ENCODE measurements at regions of chr3 and their contacts with region 1.

Region 1: DNA sequence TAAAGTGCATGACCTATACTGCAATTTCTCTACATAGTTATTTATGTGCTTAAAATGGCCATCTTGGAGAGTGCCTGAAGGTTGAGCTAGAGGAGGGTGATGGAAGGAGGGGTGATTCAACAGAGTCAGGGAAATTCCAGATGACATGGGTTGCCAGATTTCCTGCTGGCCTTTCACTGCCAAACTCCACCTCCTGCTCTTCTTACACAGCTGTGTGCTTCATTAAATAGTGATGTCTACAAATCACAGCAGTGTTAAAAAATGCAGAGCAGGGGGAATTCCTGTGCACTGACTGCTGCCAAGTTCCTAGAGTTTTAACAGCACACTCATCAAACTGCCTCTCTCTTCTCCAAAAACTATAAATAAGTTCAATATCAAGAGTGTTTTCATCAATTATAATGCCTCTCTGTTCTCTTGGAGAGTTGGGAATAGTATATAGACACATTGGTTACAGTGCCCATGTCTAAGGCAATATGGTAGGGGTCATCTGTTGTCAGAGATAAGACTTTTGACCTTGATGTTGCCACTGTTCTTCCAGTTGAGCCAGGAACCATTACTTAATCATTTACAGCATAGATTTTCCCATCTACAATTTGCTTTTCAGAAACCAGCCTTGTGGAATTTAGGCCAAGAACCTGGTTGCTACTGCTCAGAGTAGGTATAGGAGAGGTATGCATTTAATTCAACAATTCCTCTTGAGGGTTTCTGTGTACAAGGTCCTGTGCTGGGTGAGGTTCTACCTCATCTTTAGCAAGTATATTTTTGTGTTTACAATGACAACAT is 79.6 kb downstream of the TP63 start:
- DNase-seq: peak; percentile 95
- H3K4me3 ChIP-seq: no peak overlapping the region
- H3K27ac ChIP-seq: peak overlapping the region; percentile 57
- H3K4me1 ChIP-seq: peaks cover 22% of the 10 kb centered on the region
- H3K27me3 ChIP-seq: no peaks in the 10 kb centered on the region
- CTCF ChIP-seq: no peak
- POLR2A ChIP-seq: no peak

Region 2: DNA sequence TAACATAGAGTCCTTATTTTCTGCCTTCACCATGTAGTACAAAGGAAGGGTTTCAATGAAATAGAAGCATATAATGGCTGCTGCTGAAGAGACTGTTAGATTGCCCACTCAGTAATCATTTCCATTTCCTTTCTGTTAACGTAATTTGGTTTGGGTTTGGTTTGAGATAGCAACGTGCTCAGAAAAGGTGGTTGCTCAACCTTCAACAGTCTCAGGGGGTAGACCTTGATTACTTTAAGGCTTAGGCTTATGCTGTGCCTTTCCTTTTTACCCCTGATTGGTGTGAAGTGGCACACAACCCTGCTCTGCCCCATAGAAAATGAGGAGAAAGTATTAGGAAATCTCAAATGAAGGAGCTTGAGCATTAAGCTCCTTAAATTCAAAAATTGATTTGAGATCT is 243.4 kb before region 1 on chr3:
- CTCF ChIA-PET with region 1: no interaction called
- POLR2A ChIA-PET with region 1: no interaction called
- dilution Hi-C with region 1: no loop called
- intact Hi-C with region 1: no loop called
- DNase-seq: no peak
- H3K4me3 ChIP-seq: no peak overlapping the region
- H3K27ac ChIP-seq: no peak overlapping the region
- H3K4me1 ChIP-seq: no peaks in the 10 kb centered on the region
- H3K27me3 ChIP-seq: no peaks in the 10 kb centered on the region
- CTCF ChIP-seq: no peak
- POLR2A ChIP-seq: no peak

Region 3: DNA sequence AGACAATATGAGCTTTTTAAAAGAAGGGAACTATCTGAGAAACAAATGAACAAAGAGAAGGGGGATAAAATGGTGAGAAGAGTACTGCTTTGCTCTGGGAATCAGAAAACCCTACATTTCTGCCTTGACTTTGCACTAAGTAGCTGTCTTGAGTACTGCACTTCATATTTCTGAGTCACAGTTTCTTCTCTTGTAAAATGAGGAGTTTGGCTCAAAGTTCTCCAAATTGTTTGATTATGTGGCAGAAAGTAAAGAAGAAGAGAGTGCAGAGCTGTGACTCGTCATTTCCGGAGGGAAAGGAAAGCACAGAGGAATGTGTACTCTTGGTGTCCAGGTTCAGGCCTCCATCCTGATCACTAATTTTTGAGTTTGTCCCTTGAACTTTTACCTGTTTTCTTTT is 25.0 kb before region 1 on chr3:
- CTCF ChIA-PET with region 1: interaction called, 10 read pairs
- POLR2A ChIA-PET with region 1: interaction called, 7 read pairs
- dilution Hi-C with region 1: no loop called
- intact Hi-C with region 1: no loop called
- DNase-seq: peak; percentile 78
- H3K4me3 ChIP-seq: no peak overlapping the region
- H3K27ac ChIP-seq: peak overlapping the region; percentile 96
- H3K4me1 ChIP-seq: peaks cover 15% of the 10 kb centered on the region
- H3K27me3 ChIP-seq: no peaks in the 10 kb centered on the region
- CTCF ChIP-seq: no peak
- POLR2A ChIP-seq: no peak

Region 4: GRCh38 chr3:189728915-189729314 is 18.1 kb after region 1 on chr3:
- CTCF ChIA-PET with region 1: no interaction called
- POLR2A ChIA-PET with region 1: no interaction called
- dilution Hi-C with region 1: no loop called
- intact Hi-C with region 1: no loop called
- DNase-seq: no peak
- H3K4me3 ChIP-seq: no peak overlapping the region
- H3K27ac ChIP-seq: no peak overlapping the region
- H3K4me1 ChIP-seq: no peaks in the 10 kb centered on the region
- H3K27me3 ChIP-seq: no peaks in the 10 kb centered on the region
- CTCF ChIP-seq: no peak
- POLR2A ChIP-seq: no peak

Region 5: DNA sequence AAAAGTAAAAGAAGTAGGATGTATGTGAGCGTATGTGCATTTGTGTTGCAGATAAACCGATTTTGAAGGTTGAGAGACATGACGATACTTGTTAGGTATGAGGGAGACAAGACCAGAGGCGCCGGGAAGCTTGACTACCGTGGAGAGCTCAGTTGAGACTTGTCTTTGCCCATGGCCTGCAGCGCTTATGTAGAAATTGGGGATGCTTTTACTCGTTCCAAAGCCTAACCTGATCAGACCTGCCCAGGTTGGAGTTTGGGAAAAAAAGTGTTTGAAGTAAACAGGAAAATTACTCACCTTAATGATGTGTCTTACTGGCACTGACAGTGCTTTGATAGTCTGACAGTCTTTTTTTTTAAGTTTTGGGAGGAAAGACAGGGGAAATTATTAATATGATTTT is 123.2 kb after region 1 on chr3:
- CTCF ChIA-PET with region 1: no interaction called
- POLR2A ChIA-PET with region 1: no interaction called
- dilution Hi-C with region 1: no loop called
- intact Hi-C with region 1: no loop called
- DNase-seq: no peak
- H3K4me3 ChIP-seq: no peak overlapping the region
- H3K27ac ChIP-seq: no peak overlapping the region
- H3K4me1 ChIP-seq: no peaks in the 10 kb centered on the region
- H3K27me3 ChIP-seq: no peaks in the 10 kb centered on the region
- CTCF ChIP-seq: no peak
- POLR2A ChIP-seq: no peak

Measured in endothelial cell of umbilical vein (primary cell).